Activated CD8-positive, alpha-beta T cell treated with anti-CD3 and anti-CD28 coated beads for 36 hours (primary cell): ENCODE measurements at regions of chr1 and their contacts with region 1.

Region 1: DNA sequence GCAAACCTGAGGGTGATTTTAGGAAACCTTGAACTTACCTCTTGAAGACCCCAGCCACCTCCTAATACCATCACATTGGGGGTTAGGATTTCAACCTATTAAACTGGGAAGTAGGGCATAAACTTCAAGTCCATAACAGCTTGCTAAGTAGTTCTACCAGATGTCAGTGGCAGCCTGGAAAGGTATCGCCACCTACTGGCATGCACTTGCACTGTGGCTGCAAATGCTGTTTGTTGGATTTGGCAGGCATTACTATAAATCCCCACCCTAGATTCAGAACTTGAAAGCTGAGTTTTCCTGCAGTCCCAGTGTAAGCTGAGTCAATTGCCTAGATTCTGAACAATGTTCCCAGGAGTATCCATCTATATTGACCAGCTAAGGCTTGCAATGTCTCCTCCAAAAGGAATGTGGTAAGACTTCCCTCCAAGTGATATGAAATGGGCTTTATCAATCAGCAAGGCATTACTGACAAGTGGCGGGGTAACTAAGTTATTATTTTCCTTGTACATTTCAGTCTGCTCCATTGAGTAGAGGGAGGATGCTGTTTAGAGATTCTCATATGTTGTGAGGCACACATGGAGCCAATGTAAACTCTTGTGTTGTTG is 474.5 kb downstream of the PTPRC start:
- DNase-seq: peak; percentile 81
- ATAC-seq: peak; percentile 69
- H3K4me3 Mint-ChIP-seq: no peak overlapping the region
- H3K27ac Mint-ChIP-seq: no peak overlapping the region
- H3K4me1 Mint-ChIP-seq: peaks cover 4% of the 10 kb centered on the region
- H3K27me3 Mint-ChIP-seq: peaks cover 1% of the 10 kb centered on the region
- CTCF ChIP-seq: peak; percentile 80

Region 2: DNA sequence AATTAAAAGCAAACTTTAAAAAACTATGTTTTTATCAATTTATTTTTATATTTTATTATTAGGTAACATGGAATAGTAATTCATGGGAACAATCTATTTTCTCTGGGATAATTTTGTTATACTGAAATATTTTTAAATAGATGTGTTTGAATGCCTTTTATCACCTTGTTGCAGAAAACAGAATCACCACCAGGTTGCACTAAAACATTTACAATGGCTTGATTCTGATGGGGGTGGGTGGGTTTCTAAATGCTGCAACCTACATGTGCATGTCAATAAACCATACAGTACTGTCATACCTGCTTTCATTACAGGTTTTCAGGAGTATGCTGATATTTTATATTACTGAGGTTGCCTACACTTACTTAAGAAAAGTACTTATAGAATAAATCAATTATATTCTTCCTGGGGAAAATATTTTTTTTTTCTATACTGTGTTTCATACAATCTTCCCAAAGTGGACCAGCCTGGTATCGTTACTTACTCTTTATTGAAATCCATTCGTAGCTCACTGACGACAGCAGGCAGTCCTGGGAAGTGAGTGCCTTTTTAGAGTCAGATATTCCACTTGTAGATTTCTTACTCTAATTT is 341.7 kb before region 1 on chr1:
- CTCF ChIA-PET with region 1: interaction called, 14 read pairs
- POLR2A ChIA-PET with region 1: no interaction called
- intact Hi-C with region 1: no loop called
- DNase-seq: peak; percentile 42
- ATAC-seq: peak; percentile 68
- H3K4me3 Mint-ChIP-seq: no peak overlapping the region
- H3K27ac Mint-ChIP-seq: no peak overlapping the region
- H3K4me1 Mint-ChIP-seq: peaks cover 5% of the 10 kb centered on the region
- H3K27me3 Mint-ChIP-seq: peaks cover 2% of the 10 kb centered on the region
- CTCF ChIP-seq: peak; percentile 68

Region 3: DNA sequence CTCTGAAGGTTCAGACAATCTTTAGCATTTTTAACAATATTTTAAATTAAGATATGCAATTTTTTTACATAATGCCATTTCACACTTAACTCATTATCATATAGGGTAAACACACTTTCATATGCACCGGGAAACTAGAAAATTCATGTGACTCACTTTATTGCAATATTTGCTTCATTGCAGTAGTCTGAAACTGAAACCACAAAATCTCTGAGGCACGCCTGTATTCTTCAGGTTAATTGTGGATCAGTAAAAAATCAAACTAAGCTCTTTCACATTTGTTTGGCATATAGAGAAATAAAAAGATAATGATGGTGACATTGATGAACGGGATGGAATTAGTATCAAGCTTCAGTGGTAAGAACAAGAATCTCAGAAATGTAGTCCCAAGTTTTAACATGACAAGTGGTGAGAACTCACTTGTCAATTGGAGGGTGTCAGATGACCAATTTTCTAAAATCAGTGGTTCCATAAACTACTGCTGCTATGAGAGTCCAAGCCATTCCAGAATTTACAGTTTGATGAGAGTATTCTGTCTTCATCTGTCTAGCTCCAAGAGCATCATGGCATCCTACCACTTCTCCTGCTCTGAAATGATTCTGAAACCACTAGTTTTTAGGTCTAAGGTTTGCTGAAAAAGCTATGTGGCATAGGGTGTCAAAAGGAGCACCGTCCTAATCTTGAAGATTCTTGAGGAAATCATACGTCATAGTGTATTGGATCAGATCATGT is 193.5 kb before region 1 on chr1:
- CTCF ChIA-PET with region 1: interaction called, 10 read pairs
- POLR2A ChIA-PET with region 1: no interaction called
- intact Hi-C with region 1: no loop called
- DNase-seq: peak; percentile 33
- ATAC-seq: peak; percentile 79
- H3K4me3 Mint-ChIP-seq: peak overlapping the region; percentile 54
- H3K27ac Mint-ChIP-seq: peak overlapping the region; percentile 84
- H3K4me1 Mint-ChIP-seq: peaks cover 76% of the 10 kb centered on the region
- H3K27me3 Mint-ChIP-seq: no peaks in the 10 kb centered on the region
- CTCF ChIP-seq: no peak

Region 4: DNA sequence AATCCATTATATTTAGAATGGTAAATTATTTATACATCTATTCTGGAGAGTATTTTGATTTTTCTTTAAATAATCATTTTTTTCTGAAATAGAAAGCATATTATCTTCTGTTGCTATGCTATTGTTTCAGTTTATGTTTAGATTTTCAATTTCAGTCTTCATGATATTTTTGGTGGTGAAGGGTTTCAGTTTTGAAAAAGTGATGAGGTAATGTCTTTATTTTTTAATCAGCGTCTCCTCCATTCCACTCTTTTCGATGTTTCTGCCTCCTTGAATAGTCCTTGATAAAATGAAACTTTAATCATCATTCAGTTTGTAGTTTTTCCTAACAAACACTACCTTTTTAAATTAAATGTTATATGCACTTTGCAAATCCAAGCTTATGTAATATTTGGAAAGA is 45.9 kb before region 1 on chr1:
- CTCF ChIA-PET with region 1: interaction called, 11 read pairs
- POLR2A ChIA-PET with region 1: no interaction called
- intact Hi-C with region 1: no loop called
- DNase-seq: no peak
- ATAC-seq: no peak
- H3K4me3 Mint-ChIP-seq: no peak overlapping the region
- H3K27ac Mint-ChIP-seq: no peak overlapping the region
- H3K4me1 Mint-ChIP-seq: peaks cover 7% of the 10 kb centered on the region
- H3K27me3 Mint-ChIP-seq: no peaks in the 10 kb centered on the region
- CTCF ChIP-seq: no peak

Region 5: GRCh38 chr1:199102239-199102638 is 11.1 kb before region 1 on chr1:
- CTCF ChIA-PET with region 1: interaction called, 14 read pairs
- POLR2A ChIA-PET with region 1: no interaction called
- intact Hi-C with region 1: no loop called
- DNase-seq: peak; percentile 29
- ATAC-seq: peak; percentile 75
- H3K4me3 Mint-ChIP-seq: no peak overlapping the region
- H3K27ac Mint-ChIP-seq: no peak overlapping the region
- H3K4me1 Mint-ChIP-seq: peaks cover 8% of the 10 kb centered on the region
- H3K27me3 Mint-ChIP-seq: no peaks in the 10 kb centered on the region
- CTCF ChIP-seq: no peak